Dendritic cell treated with granulocyte-macrophage colony-stimulating factor and Interleukin-4, amounts not matched to agents 40 ng/mL and 50 ng/mL, for 4 days (primary cell): ENCODE measurements at regions of chr7 and their contacts with region 1.

Region 1: GRCh38 chr7:28272461-28272877 is 91.9 kb upstream of the JAZF1 start:
- H3K4me3 Mint-ChIP-seq: peak overlapping the region; percentile 70
- H3K27ac Mint-ChIP-seq: peak overlapping the region; percentile 40
- H3K4me1 Mint-ChIP-seq: peaks cover 23% of the 10 kb centered on the region
- H3K27me3 Mint-ChIP-seq: peaks cover 7% of the 10 kb centered on the region

Region 2: GRCh38 chr7:28144266-28144665 is 128.2 kb before region 1 on chr7:
- intact Hi-C with region 1: loop called (anchors 5 kb)
- H3K4me3 Mint-ChIP-seq: no peak overlapping the region
- H3K27ac Mint-ChIP-seq: no peak overlapping the region
- H3K4me1 Mint-ChIP-seq: peaks cover 5% of the 10 kb centered on the region
- H3K27me3 Mint-ChIP-seq: no peaks in the 10 kb centered on the region

Region 3: GRCh38 chr7:29289156-29290021 is 1016.9 kb after region 1 on chr7:
- intact Hi-C with region 1: no loop called
- H3K4me3 Mint-ChIP-seq: peak overlapping the region; percentile 56
- H3K27ac Mint-ChIP-seq: peak overlapping the region; percentile 91
- H3K4me1 Mint-ChIP-seq: peaks cover 62% of the 10 kb centered on the region
- H3K27me3 Mint-ChIP-seq: no peaks in the 10 kb centered on the region